ENCODE measurements at regions of chr14 and their contacts with region 1.

Region 1: DNA sequence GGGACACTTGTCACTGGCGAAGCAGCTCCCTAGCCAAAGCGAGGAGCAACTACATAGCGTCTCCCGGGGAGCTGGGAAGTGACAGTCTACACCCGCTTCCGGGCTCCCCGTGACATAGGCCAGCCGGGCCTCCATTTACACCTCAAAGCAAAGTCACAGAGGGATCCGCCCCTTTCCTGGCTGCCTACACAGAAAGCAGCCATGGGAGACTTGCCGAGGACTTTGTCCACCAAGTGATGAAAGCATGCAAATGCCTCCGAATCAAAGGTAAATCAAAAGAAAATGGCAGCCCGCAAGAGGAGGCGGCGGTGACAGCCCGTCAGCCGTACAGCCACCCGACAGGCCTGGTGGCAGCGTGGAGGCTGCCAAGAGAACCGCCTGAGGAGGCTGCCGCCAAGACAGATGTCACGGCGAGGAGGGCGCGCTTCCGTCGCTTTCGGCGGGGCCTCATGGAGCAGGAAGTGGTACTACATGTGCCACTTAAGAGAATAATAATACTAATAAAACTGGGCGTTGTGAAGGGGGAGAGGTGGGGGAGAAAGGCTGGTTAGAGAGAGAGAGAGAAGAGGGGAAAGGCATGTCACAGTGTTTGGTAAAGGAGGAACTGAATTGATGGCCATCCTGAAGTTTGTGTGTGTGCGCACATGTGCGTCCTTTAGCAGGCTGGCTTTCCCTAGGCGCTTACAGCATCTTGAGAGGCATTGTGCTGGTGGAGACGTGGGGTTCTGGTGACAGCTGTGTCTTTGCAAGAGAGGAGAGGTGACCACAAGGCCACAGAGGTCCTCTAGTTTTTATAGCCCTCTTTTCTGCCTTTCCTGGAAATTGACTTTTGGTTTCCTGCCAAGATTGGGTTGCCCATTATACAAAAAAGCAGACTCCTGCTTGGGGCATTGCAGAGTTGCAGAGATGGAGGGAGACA is 661.7 kb downstream of the VRK1 start:
- DNase-seq: peak; percentile 73
- H3K4me3 Mint-ChIP-seq: peak overlapping the region; percentile 92
- H3K27ac Mint-ChIP-seq: peak overlapping the region; percentile 100
- H3K4me1 Mint-ChIP-seq: peaks cover 55% of the 10 kb centered on the region
- H3K27me3 Mint-ChIP-seq: no peaks in the 10 kb centered on the region

Region 2: GRCh38 chr14:97306760-97307246 is 152.1 kb before region 1 on chr14:
- intact Hi-C with region 1: loop called (anchors 2 kb)
- DNase-seq: no peak
- H3K4me3 Mint-ChIP-seq: peak overlapping the region; percentile 9
- H3K27ac Mint-ChIP-seq: peak overlapping the region; percentile 81
- H3K4me1 Mint-ChIP-seq: peaks cover 28% of the 10 kb centered on the region
- H3K27me3 Mint-ChIP-seq: no peaks in the 10 kb centered on the region

Region 3: GRCh38 chr14:97408937-97409815 is 49.7 kb before region 1 on chr14:
- intact Hi-C with region 1: loop called (anchors 1 kb)
- DNase-seq: peak; percentile 24
- H3K4me3 Mint-ChIP-seq: peak overlapping the region; percentile 68
- H3K27ac Mint-ChIP-seq: peak overlapping the region; percentile 88
- H3K4me1 Mint-ChIP-seq: peaks cover 32% of the 10 kb centered on the region
- H3K27me3 Mint-ChIP-seq: peaks cover 4% of the 10 kb centered on the region

Region 4: DNA sequence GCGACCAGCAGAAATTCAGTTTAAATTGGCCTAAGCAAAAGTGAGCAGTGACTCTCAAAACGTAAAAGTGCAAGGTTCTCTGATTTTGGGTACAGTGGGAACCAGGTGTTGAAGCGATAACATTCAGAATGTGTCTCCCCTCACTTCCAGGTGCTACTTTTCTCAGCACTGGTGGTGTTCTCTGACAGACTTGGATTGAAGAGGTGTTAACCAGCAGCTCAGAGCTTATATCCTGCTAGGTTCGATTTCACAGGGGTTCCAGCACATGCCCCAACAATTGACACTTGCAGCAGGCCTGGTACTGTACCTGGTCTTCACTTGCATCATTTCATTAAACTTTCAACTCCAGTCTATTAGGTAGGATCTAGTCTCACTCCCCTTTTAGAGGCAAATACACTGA is 18.4 kb after region 1 on chr14:
- intact Hi-C with region 1: no loop called
- DNase-seq: no peak
- H3K4me3 Mint-ChIP-seq: no peak overlapping the region
- H3K27ac Mint-ChIP-seq: no peak overlapping the region
- H3K4me1 Mint-ChIP-seq: no peaks in the 10 kb centered on the region
- H3K27me3 Mint-ChIP-seq: no peaks in the 10 kb centered on the region

Region 5: GRCh38 chr14:97602438-97603117 is 143.7 kb after region 1 on chr14:
- intact Hi-C with region 1: loop called (anchors 5 kb)
- DNase-seq: peak; percentile 64
- H3K4me3 Mint-ChIP-seq: no peak overlapping the region
- H3K27ac Mint-ChIP-seq: no peak overlapping the region
- H3K4me1 Mint-ChIP-seq: peaks cover 25% of the 10 kb centered on the region
- H3K27me3 Mint-ChIP-seq: no peaks in the 10 kb centered on the region

Region 6: GRCh38 chr14:97644365-97644764 is 185.4 kb after region 1 on chr14:
- intact Hi-C with region 1: no loop called
- DNase-seq: no peak
- H3K4me3 Mint-ChIP-seq: no peak overlapping the region
- H3K27ac Mint-ChIP-seq: no peak overlapping the region
- H3K4me1 Mint-ChIP-seq: peaks cover 24% of the 10 kb centered on the region
- H3K27me3 Mint-ChIP-seq: peaks cover 2% of the 10 kb centered on the region

Region 7: DNA sequence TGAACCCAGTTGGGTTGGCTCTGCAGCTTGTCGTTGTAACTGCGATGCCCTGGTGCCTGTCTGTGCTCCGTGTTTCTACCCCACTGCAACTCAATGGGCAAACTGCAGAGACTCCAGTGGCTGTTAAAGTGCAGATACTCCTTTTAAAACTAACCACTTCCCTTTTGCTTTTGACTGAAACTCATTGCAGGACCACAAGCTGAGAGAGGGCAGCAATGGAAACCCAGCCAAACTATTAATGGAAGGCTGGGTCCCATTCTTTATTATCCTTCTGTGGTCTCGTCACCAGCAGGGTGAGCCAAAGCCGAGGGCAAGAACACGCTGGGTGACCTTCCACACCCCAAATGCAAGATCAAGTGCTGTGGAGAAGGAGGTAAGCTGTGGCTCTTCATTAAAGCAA is 248.7 kb after region 1 on chr14:
- intact Hi-C with region 1: loop called (anchors 2 kb)
- DNase-seq: no peak
- H3K4me3 Mint-ChIP-seq: peak overlapping the region; percentile 9
- H3K27ac Mint-ChIP-seq: no peak overlapping the region
- H3K4me1 Mint-ChIP-seq: peaks cover 79% of the 10 kb centered on the region
- H3K27me3 Mint-ChIP-seq: no peaks in the 10 kb centered on the region

Region 8: GRCh38 chr14:98173305-98173704 is 714.4 kb after region 1 on chr14:
- intact Hi-C with region 1: loop called (anchors 1 kb)
- DNase-seq: peak; percentile 45
- H3K4me3 Mint-ChIP-seq: peak overlapping the region; percentile 73
- H3K27ac Mint-ChIP-seq: peak overlapping the region; percentile 90
- H3K4me1 Mint-ChIP-seq: peaks cover 97% of the 10 kb centered on the region
- H3K27me3 Mint-ChIP-seq: no peaks in the 10 kb centered on the region

Region 9: DNA sequence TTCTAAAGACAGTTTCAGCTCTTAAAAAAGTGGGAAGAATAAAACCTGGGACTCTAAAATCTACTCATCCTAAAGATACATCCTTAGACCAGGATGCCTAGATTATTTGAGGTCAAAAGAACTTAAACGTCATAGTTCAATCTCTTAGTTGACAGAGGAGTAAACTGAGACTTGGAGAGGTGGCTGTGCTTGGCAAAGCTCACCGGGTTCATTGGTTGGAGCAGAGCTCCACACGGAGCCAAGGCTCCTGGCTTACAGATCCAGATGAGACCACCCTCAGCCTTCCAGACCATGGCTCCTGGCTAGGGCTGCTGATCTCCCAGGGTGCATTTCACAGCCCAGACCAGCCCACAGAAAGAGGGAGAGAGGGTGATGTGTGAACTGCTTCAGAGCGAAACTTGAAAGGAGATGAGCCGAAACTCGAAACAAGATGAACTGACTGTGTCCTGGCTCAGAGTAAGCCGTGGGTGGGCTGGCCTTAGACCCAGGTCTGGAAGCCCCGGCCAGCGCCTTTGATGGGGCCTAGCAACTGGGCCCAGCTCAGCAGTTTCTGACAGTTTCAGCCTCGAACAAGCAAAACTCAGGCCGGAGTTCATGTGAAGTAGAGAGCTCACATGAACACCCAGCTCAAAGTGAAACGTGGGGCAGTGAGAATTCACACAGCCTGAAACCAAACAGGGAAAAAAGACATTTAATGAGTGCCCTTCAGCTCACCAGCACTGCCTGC is 768.2 kb after region 1 on chr14:
- intact Hi-C with region 1: no loop called
- DNase-seq: peak; percentile 36
- H3K4me3 Mint-ChIP-seq: peak overlapping the region; percentile 54
- H3K27ac Mint-ChIP-seq: peak overlapping the region; percentile 81
- H3K4me1 Mint-ChIP-seq: peaks cover 63% of the 10 kb centered on the region
- H3K27me3 Mint-ChIP-seq: no peaks in the 10 kb centered on the region

Region 10: GRCh38 chr14:99271951-99272631 is 1813.2 kb after region 1 on chr14 and contains the start of gene BCL11B:
- intact Hi-C with region 1: loop called (anchors 2 kb)
- DNase-seq: peak; percentile 84
- H3K4me3 Mint-ChIP-seq: peak within 1 kb of the TSS; percentile 93
- H3K27ac Mint-ChIP-seq: peak within 1 kb of the TSS; percentile 93
- H3K4me1 Mint-ChIP-seq: peaks cover 38% of the 10 kb centered on the region
- H3K27me3 Mint-ChIP-seq: peaks cover 8% of the 10 kb centered on the region
- total RNA-seq, gene BCL11B: 43.5 and 45.4 TPM in 2 replicates

Measured in activated T-helper 1 cell treated with anti-CD3 and anti-CD28 coated beads, Interleukin-12 subunit alpha, Interleukin-12 subunit beta, Interleukin-2, Interleukin-4 antibody, amounts not matched to agents 30 ng/mL and 10 ng/mL and 1 ng/mL, durations not matched to agents 14 hours and 24 hours and 36 hours (primary cell).